ENCODE measurements at regions of chr6 and their contacts with region 1.

Region 1: GRCh38 chr6:41318654-41319565 is 16.5 kb upstream of the NCR2 start:
- DNase-seq: peak; percentile 82 to 90
- H3K4me3 ChIP-seq: peak overlapping the region in 2 of 4 experiments; percentile 16 to 47; a peak in 3 of 8 replicates
- H3K27ac ChIP-seq: no peak overlapping the region
- H3K4me1 ChIP-seq: peaks cover 0 to 13% (median 3%) of the 10 kb centered on the region in 4 experiments; a peak in 5 of 7 replicates
- H3K27me3 ChIP-seq: peaks cover 0 to 4% (median 2%) of the 10 kb centered on the region in 4 experiments; a peak in 1 of 7 replicates
- CTCF ChIP-seq: peak; percentile 97 to 100 (median 100)
- EP300 ChIP-seq: no peak
- POLR2A ChIP-seq: peak in 1 of 2 experiments; percentile 59; a peak in 2 of 3 replicates
- RAD21 ChIP-seq: peak; percentile 95 to 96

Region 2: DNA sequence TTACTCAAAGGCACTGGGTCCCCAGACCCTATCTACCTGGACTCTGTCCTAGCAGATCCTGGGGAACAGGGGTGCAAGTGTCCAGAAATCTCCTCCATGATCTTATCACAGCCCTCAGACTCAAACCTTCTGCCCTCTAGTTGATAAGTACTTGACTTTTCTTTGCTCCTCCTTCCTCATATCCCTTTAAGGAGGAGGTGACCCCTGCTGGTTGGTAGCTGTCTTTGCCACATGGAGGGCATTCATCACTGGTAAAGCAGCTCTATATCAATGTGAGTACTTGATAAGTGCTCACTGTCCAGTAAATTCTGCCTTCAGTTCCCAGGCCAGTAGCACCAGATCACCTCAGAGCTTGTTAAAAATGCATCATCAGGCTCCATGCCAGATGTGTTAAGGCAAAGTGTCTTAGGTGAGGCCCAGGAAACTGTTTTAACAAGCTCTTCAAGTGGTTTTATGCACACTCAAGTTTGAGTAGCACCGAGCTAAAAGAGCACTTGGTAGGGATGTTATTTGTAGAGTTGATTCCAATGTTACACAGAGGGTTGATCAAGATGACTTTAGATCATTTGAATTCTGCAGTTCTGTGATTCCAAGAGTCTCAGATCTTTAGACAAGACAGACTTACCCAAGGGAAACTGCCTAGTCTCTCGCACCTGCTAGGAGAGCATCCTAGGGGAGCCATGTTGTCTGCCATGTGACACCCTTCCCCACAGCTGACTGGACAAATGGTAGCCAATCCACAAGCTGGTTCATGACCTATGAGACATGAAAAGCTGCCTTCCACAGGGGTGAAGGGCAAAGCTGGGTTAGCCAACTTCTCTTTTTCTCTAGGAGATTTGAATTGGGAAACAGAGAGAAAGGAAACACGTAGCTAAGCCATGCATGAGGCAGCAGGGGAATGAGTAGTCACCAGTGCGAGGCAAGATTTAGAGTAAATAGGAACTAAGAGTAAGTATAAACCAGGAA is 136.6 kb before region 1 on chr6:
- CTCF ChIA-PET with region 1: interaction called, 10 read pairs
- POLR2A ChIA-PET with region 1: no interaction called
- DNase-seq: peak in 1 of 2 experiments; percentile 53
- H3K4me3 ChIP-seq: no peak overlapping the region
- H3K27ac ChIP-seq: no peak overlapping the region
- H3K4me1 ChIP-seq: peaks cover 0 to 4% (median 0%) of the 10 kb centered on the region in 4 experiments; a peak in 1 of 7 replicates
- H3K27me3 ChIP-seq: no peaks in the 10 kb centered on the region
- CTCF ChIP-seq: peak; percentile 17 to 90 (median 73)
- EP300 ChIP-seq: no peak
- POLR2A ChIP-seq: no peak
- RAD21 ChIP-seq: peak; percentile 69 to 81

Region 3: DNA sequence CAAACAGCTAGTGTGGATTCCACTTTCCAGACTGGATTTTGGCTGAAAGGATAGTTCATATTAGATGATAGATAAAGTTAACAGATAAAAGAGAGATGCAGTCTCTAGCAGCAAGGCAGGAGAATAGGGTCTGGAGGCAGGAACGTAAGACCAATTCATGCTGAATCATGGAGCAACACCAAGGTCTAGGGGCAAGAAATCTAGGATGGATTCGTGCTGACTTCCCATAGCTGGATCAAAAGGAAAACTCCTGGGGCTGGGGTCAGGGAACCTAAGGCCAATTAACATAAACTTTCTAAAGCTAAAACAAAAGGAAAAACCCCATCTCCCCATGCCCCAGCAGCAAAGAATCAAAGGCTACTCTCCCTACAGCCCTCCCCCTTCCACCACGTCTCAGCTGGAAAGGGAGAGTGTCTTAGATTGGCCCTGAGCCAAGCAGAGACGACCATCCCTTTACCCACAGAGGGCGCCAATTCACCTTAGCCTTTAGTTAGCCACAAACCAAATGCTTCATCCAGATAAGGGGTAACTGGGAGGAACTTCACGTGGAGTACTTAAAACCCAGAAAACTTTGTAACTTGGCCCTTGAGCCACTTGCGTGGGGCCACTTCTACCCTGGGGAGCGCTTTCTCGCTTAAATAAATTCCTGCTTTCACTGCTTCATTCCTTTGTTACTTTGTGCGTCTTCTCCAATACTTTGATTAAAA is 40.1 kb before region 1 on chr6:
- CTCF ChIA-PET with region 1: interaction called, 16 read pairs
- POLR2A ChIA-PET with region 1: interaction called, 3 read pairs
- DNase-seq: peak; percentile 72 to 78
- H3K4me3 ChIP-seq: no peak overlapping the region
- H3K27ac ChIP-seq: no peak overlapping the region
- H3K4me1 ChIP-seq: peaks cover 0 to 3% (median 0%) of the 10 kb centered on the region in 4 experiments; a peak in 2 of 7 replicates
- H3K27me3 ChIP-seq: no peaks in the 10 kb centered on the region
- CTCF ChIP-seq: peak; percentile 65 to 94 (median 65)
- EP300 ChIP-seq: no peak
- POLR2A ChIP-seq: no peak
- RAD21 ChIP-seq: peak; percentile 60 to 74

Region 4: DNA sequence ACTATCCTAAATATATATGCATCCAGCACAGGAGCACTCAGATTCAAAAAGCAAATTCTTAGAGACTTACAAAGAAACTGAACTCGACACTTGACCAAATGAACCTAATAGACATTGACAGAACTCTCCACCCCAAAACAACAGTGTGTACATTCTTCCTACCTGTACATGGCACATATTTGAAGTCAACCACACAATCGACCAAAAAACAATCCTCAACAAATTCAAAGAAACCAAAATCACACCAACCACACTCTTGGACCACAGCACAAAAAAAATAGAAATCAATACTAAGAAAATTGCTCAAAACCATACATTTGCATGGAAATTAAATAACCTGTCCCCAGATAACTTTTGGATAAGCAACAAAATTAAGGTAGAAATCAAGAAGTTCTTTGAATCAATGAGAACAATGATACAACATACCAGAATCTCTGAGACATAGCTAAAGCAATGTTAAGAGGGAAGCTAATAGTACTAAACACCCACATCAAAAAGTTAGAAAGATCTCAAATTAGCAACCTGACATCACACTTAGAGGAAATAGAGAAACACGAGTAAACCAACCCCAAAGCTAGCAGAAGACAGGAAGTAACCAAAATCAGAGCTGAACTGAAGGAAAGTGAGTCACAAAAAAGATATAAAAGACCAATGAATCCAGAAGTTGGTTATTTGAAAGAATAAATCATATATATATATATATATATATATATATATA is 20.0 kb before region 1 on chr6:
- CTCF ChIA-PET with region 1: interaction called, 97 read pairs
- POLR2A ChIA-PET with region 1: no interaction called
- DNase-seq: no peak
- H3K4me3 ChIP-seq: no peak overlapping the region
- H3K27ac ChIP-seq: no peak overlapping the region
- H3K4me1 ChIP-seq: peaks cover 0 to 11% (median 3%) of the 10 kb centered on the region in 4 experiments; a peak in 3 of 7 replicates
- H3K27me3 ChIP-seq: peaks cover 0 to 2% (median under 1%) of the 10 kb centered on the region in 4 experiments; a peak in 3 of 7 replicates
- CTCF ChIP-seq: no peak
- EP300 ChIP-seq: no peak
- POLR2A ChIP-seq: no peak
- RAD21 ChIP-seq: no peak

Region 5: DNA sequence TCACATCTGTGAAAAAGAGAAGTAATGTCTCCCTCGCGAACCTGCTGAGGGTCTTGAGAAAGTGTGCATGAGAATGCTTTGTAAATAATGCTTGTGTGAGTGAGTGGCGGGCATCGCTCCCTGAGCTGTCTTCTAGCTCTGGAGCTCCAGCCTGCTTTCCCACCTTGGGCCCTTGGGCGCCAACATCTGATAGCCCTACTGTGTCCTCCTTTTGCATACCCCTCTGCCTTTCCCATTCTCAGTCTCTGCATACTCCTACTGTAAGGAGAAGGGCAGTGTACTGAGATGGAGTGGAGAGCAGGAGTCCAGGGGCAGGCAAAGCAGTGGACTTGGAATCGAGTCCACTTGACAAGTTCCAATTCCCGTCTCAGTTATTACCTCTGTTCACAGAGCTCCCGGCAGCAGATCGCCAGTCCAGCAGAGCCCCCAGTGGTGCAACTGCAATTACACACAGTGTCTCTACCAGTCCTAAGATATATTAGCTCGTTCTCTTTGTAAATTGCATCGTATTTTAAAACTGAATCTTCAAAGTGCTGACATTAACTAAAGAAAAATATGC is 15.7 kb after region 1 on chr6:
- CTCF ChIA-PET with region 1: interaction called, 20 read pairs
- POLR2A ChIA-PET with region 1: interaction called, 4 read pairs
- DNase-seq: no peak
- H3K4me3 ChIP-seq: no peak overlapping the region
- H3K27ac ChIP-seq: no peak overlapping the region
- H3K4me1 ChIP-seq: peaks cover 0 to 5% (median 0%) of the 10 kb centered on the region in 4 experiments; a peak in 1 of 7 replicates
- H3K27me3 ChIP-seq: 0 out of 7 replicates have a peak, but pooled peaks cover 0 to 2% (median 0%) of the 10 kb centered on the region in 4 experiments
- CTCF ChIP-seq: peak; percentile 23 to 43 (median 30)
- EP300 ChIP-seq: no peak
- POLR2A ChIP-seq: no peak
- RAD21 ChIP-seq: peak; percentile 25 to 47; a peak in 3 of 4 replicates

Region 6: GRCh38 chr6:41392246-41392645 is 73.3 kb after region 1 on chr6:
- CTCF ChIA-PET with region 1: no interaction called
- POLR2A ChIA-PET with region 1: no interaction called
- DNase-seq: no peak
- H3K4me3 ChIP-seq: no peak overlapping the region
- H3K27ac ChIP-seq: no peak overlapping the region
- H3K4me1 ChIP-seq: peaks cover 0 to 3% (median 0%) of the 10 kb centered on the region in 4 experiments; a peak in 2 of 7 replicates
- H3K27me3 ChIP-seq: peaks cover 1 to 27% (median 12%) of the 10 kb centered on the region in 4 experiments; a peak in 6 of 7 replicates
- CTCF ChIP-seq: no peak
- EP300 ChIP-seq: no peak
- POLR2A ChIP-seq: no peak
- RAD21 ChIP-seq: no peak

Region 7: DNA sequence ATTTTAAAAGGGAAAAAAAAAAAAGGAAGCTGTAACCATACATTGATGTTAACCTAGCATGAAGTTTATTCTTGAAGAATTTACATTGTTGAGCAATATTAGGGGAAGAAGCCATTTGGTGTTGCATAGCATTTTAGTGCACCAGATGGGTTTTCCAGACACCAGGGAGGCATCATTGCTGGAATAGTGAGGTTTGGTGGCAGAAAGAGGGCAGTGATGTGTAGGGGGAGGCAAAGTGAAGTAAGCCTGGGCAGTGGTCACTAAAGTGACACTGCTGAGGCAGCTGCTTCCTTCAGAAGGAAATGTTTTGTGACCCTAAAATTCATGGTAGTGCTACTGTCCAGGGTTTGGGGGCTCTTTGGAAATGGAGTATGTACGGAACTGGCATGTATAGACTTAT is 471.1 kb after region 1 on chr6:
- CTCF ChIA-PET with region 1: no interaction called
- POLR2A ChIA-PET with region 1: no interaction called
- DNase-seq: no peak
- H3K4me3 ChIP-seq: no peak overlapping the region
- H3K27ac ChIP-seq: no peak overlapping the region
- H3K4me1 ChIP-seq: peaks cover 0 to 4% (median 1%) of the 10 kb centered on the region in 4 experiments; a peak in 5 of 7 replicates
- H3K27me3 ChIP-seq: peaks cover 0 to 9% (median 8%) of the 10 kb centered on the region in 4 experiments; a peak in 6 of 7 replicates
- CTCF ChIP-seq: no peak
- EP300 ChIP-seq: no peak
- POLR2A ChIP-seq: no peak; a peak in 1 of 3 replicates
- RAD21 ChIP-seq: no peak

Measured in H1 (cell line).